Panc1 (cell line): ENCODE measurements at regions of chr6 and their contacts with region 1.

Region 1: DNA sequence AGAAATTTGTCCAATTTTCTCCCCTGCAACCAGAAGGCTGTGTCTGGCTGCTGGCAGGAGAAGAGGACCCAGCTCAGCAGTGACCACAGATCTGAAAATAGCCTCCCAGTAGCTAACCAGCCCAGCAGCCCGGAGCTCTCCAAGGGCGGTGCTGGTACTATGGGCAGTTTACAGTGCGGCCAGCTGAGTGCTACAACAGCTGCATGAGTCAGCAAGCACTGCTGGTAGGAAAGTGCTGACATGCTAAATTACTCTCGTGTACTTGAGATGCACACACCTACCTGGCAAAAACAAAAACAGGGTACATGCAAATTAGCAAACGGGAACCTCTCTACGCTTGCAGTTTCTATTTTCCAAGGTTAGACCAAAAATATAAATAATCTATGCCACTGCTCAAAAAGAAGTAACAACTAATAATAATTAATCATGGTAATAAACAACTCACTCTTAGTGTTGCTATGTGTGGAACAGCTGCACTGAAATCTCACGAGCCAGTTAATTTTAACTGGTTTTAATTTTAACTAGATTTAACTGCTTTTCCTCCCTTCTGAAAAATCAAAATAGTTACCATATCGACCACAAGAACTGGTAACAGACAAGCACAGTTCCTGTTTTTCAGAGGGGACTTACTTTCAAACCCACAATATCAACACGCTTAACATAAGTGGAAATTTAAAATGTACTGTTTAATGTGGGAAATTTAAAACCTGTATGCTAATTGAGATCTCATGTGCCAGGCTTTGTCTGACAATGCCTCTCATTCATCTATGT is 10.8 kb downstream of the BACH2 start:
- DNase-seq: peak; percentile 59
- ATAC-seq: peak; percentile 95
- H3K4me3 ChIP-seq: peak overlapping the region in 1 of 2 experiments; percentile 49; a peak in 2 of 4 replicates
- H3K27ac ChIP-seq: peak overlapping the region; percentile 80
- H3K4me1 ChIP-seq: peaks cover 27% of the 10 kb centered on the region
- H3K27me3 ChIP-seq: no peaks in the 10 kb centered on the region
- CTCF ChIP-seq: no peak

Region 2: GRCh38 chr6:89180971-89181370 is 1104.8 kb before region 1 on chr6:
- CTCF ChIA-PET with region 1: no interaction called
- POLR2A ChIA-PET with region 1: no interaction called
- in situ Hi-C with region 1: no loop called
- intact Hi-C with region 1: no loop called
- DNase-seq: no peak
- ATAC-seq: no peak
- H3K4me3 ChIP-seq: no peak overlapping the region
- H3K27ac ChIP-seq: no peak overlapping the region
- H3K4me1 ChIP-seq: no peaks in the 10 kb centered on the region
- H3K27me3 ChIP-seq: peaks cover 6% of the 10 kb centered on the region; the same call in 1 of the 2 replicates
- CTCF ChIP-seq: no peak

Region 3: DNA sequence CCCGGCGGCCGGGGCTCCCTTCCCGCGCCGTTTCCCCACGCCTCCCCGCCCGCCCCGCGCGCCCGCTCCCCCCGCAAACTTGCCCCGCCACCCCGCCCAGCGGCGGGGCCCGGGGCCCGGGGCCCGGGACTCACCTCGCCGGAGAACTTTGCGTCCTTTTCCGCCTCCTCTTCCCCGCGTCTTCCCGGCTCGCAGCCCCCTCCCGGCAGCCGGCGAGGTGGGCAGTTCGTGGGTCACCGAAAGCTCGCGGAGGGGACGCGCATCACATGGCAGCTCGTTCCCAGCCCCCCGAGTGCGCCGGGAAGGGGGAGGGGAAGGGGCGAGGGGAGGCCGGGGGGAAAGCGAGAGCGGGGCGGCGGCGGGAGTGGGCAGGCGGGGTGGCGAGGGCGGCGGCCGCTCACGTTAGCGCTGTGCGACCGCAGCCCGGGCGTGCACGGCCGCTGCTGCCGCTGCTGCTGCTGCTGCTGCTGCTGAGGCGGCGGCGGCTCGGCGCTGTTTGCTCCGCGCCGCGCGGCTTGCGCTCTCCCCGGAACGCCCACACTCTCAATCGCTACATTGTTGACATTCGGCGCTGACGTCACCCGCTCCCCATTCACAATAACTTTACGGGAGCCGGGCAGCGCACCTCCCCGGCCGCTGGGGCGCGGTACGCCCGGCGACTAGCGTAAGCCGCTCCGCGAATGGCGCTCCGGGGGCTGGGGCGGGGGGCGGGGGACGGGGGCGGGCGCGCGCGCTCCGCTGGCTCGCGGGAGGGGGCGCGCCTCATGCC is 10.7 kb after region 1 on chr6 and contains the start of gene BACH2:
- CTCF ChIA-PET with region 1: no interaction called
- POLR2A ChIA-PET with region 1: interaction called, 12 read pairs
- in situ Hi-C with region 1: no loop called
- intact Hi-C with region 1: no loop called
- DNase-seq: no peak
- ATAC-seq: peak; percentile 78
- H3K4me3 ChIP-seq: peak within 1 kb of the TSS; percentile 52 to 66
- H3K27ac ChIP-seq: no peak within 1 kb of the TSS
- H3K4me1 ChIP-seq: peaks cover 3% of the 10 kb centered on the region; the same call in 1 of the 2 replicates
- H3K27me3 ChIP-seq: peaks cover 7% of the 10 kb centered on the region
- CTCF ChIP-seq: 0 out of 2 replicates have a peak, but pooled peaks have one; percentile 4
- total RNA-seq, gene BACH2: 1.6 TPM

Region 4: GRCh38 chr6:90393232-90393884 is 107.6 kb after region 1 on chr6:
- CTCF ChIA-PET with region 1: no interaction called
- POLR2A ChIA-PET with region 1: no interaction called
- in situ Hi-C with region 1: no loop called
- intact Hi-C with region 1: loop called (anchors 2 kb)
- DNase-seq: no peak
- ATAC-seq: peak; percentile 78
- H3K4me3 ChIP-seq: no peak overlapping the region
- H3K27ac ChIP-seq: no peak overlapping the region
- H3K4me1 ChIP-seq: no peaks in the 10 kb centered on the region; the same call in 1 of the 2 replicates
- H3K27me3 ChIP-seq: no peaks in the 10 kb centered on the region
- CTCF ChIP-seq: peak; percentile 90

Region 5: DNA sequence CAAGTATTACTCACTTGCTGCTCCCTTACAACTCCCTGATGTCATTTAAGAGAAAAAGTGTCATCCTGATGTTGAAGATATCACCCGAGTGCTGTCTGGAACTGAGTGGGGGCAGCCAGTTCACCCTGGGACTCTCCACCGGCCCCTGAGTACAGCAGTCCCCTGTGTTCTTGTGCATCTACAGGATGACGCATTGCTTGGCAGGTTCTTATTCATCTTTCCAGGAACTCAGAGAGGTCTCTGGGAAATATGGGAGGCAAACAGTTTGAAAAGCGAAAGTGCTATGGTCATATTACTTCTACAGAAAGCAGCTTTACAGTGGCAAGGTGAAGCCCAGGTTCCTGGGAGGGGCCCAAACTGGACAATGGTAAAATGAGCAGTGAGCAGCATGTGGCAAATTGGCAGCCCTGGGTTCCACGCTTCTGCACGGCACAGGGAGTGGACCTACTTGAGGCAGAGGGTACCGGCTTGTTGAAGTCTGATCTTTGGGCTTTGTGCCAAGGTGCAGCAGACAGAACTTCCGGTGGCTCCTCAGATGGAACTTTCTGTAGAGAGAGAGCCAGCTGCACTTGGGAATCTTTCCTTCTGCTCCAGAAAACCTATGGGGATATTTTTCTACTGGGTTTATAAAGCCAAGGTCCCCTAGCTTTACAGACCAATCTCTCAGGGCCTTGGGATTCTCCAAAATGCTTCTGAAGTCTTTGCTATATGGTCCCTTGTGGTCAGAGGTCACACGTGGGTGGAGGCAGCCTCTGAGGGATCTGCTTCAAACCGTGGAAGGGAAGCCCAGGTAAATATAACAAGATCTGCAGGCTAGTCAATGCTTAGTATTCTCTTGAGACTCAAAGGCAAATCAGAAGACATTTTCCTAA is 172.8 kb after region 1 on chr6:
- CTCF ChIA-PET with region 1: no interaction called
- POLR2A ChIA-PET with region 1: no interaction called
- in situ Hi-C with region 1: no loop called
- intact Hi-C with region 1: no loop called
- DNase-seq: no peak
- ATAC-seq: no peak
- H3K4me3 ChIP-seq: no peak overlapping the region
- H3K27ac ChIP-seq: no peak overlapping the region
- H3K4me1 ChIP-seq: no peaks in the 10 kb centered on the region
- H3K27me3 ChIP-seq: no peaks in the 10 kb centered on the region
- CTCF ChIP-seq: no peak

Region 6: GRCh38 chr6:90478789-90479602 is 193.2 kb after region 1 on chr6:
- CTCF ChIA-PET with region 1: no interaction called
- POLR2A ChIA-PET with region 1: no interaction called
- in situ Hi-C with region 1: no loop called
- intact Hi-C with region 1: loop called (anchors 2 kb)
- DNase-seq: peak; percentile 84
- ATAC-seq: peak; percentile 99
- H3K4me3 ChIP-seq: no peak overlapping the region
- H3K27ac ChIP-seq: no peak overlapping the region
- H3K4me1 ChIP-seq: peaks cover 6% of the 10 kb centered on the region
- H3K27me3 ChIP-seq: no peaks in the 10 kb centered on the region
- CTCF ChIP-seq: peak; percentile 86

Region 7: GRCh38 chr6:90571632-90572031 is 285.8 kb after region 1 on chr6:
- CTCF ChIA-PET with region 1: no interaction called
- POLR2A ChIA-PET with region 1: no interaction called
- in situ Hi-C with region 1: no loop called
- intact Hi-C with region 1: no loop called
- DNase-seq: no peak
- ATAC-seq: no peak
- H3K4me3 ChIP-seq: no peak overlapping the region
- H3K27ac ChIP-seq: no peak overlapping the region
- H3K4me1 ChIP-seq: no peaks in the 10 kb centered on the region
- H3K27me3 ChIP-seq: no peaks in the 10 kb centered on the region
- CTCF ChIP-seq: no peak